ENCODE measurements at regions of chr2 and their contacts with region 1.

Region 1: DNA sequence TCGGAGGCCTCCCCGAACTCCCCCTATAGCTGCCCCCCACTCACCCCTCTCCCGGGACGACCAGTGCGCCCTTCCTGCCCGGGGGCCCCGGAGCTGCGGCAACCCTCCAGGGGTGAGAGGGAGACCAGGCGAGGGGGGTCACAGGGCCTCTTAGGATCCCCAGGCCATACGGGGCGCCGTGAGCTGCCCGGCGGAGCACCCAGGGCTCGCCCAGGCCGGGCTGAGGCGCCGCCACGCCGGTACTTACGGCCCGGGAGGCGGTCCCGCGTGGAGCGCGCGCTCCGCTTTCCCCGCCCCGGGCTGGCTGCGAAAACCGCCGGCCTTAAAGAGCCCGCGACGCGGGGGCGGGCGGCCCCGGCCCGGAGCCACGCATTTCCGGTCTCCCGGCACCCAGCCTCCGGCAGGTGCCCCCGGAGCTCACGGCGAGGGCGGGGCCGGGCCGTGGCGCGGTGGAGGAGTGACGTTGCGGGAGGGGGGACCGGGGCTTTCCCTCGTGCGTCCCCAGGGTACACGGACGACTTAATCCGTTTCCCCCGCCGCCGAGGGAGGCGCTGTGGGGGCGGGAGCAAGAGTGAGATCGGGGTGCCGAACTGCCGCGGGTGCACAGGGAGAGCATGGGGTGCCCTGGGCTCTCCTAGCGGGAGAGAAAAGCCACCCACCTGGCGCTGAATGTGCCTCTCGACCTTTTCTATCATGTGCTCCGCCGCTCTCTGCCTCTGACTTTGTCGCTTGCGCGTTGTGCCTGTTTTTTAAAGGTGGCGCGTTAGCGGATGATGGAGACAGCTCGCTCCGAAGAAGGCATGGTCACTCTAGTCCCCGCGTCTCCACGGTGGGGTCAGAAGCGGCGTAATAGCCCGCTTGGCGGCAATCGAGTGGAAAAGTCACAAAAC is at the start of gene METTL21A:
- DNase-seq: peak; percentile 87 to 91
- ATAC-seq: peak; percentile 89 to 96 (median 93)
- H3K4me3 ChIP-seq: peak within 1 kb of the TSS; percentile 52 to 99 (median 90)
- H3K27ac ChIP-seq: peak within 1 kb of the TSS; percentile 61 to 99 (median 94)
- H3K4me1 ChIP-seq: peaks cover 0 to 43% (median 25%) of the 10 kb centered on the region in 9 donors
- H3K27me3 ChIP-seq: no peaks in the 10 kb centered on the region
- CTCF ChIP-seq: peak; percentile 23 to 55 (median 44)
- total RNA-seq, gene METTL21A: 10.0 to 22.5 (median 12.9) TPM

Region 2: GRCh38 chr2:207370646-207371045 is 254.6 kb before region 1 on chr2:
- intact Hi-C with region 1: no loop called
- DNase-seq: no peak
- ATAC-seq: no peak
- H3K4me3 ChIP-seq: no peak overlapping the region
- H3K27ac ChIP-seq: no peak overlapping the region
- H3K4me1 ChIP-seq: no peaks in the 10 kb centered on the region
- H3K27me3 ChIP-seq: no peaks in the 10 kb centered on the region
- CTCF ChIP-seq: no peak

Region 3: GRCh38 chr2:207558106-207558505 is 67.2 kb before region 1 on chr2:
- intact Hi-C with region 1: loop called in 1 of 10 experiments (anchors 5 kb)
- DNase-seq: no peak
- ATAC-seq: no peak
- H3K4me3 ChIP-seq: no peak overlapping the region
- H3K27ac ChIP-seq: no peak overlapping the region
- H3K4me1 ChIP-seq: peaks cover 0 to 68% (median 61%) of the 10 kb centered on the region in 9 donors
- H3K27me3 ChIP-seq: no peaks in the 10 kb centered on the region
- CTCF ChIP-seq: no peak

Region 4: DNA sequence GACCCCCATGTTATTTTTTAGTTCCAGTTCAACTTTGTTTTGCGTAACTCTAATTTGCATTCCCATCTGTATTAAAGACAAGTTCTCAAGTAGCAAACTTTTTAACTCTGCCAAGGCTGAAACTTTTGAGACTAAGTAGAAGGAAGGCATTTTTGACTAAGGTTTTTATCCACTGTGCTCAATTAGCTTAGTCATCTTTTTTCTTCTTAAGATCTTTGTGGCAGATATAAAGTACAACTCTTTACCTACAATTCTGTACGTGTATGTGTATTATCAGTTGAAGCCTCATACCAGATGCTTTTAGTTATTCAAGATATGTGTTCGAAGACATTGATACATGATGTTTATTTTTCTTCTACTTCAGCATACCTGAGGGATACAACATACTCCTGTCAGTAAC is 53.9 kb before region 1 on chr2:
- intact Hi-C with region 1: loop called in 1 of 10 experiments (anchors 5 kb)
- DNase-seq: no peak
- ATAC-seq: no peak
- H3K4me3 ChIP-seq: no peak overlapping the region
- H3K27ac ChIP-seq: no peak overlapping the region
- H3K4me1 ChIP-seq: peaks cover 0 to 7% (median 0%) of the 10 kb centered on the region in 9 donors
- H3K27me3 ChIP-seq: no peaks in the 10 kb centered on the region
- CTCF ChIP-seq: no peak

Region 5: GRCh38 chr2:207676827-207677354 is 51.6 kb after region 1 on chr2:
- intact Hi-C with region 1: loop called in 1 of 10 experiments (anchors 2 kb)
- DNase-seq: no peak
- ATAC-seq: peak in 7 of 8 donors; percentile 33 to 87 (median 84)
- H3K4me3 ChIP-seq: peak overlapping the region in 3 of 10 donors; percentile 7 to 31 (median 15)
- H3K27ac ChIP-seq: peak overlapping the region in 9 of 10 donors; percentile 5 to 75 (median 43)
- H3K4me1 ChIP-seq: peaks cover 0 to 18% (median 11%) of the 10 kb centered on the region in 9 donors
- H3K27me3 ChIP-seq: peaks cover 0 to 27% (median 0%) of the 10 kb centered on the region in 7 donors
- CTCF ChIP-seq: no peak

Region 6: DNA sequence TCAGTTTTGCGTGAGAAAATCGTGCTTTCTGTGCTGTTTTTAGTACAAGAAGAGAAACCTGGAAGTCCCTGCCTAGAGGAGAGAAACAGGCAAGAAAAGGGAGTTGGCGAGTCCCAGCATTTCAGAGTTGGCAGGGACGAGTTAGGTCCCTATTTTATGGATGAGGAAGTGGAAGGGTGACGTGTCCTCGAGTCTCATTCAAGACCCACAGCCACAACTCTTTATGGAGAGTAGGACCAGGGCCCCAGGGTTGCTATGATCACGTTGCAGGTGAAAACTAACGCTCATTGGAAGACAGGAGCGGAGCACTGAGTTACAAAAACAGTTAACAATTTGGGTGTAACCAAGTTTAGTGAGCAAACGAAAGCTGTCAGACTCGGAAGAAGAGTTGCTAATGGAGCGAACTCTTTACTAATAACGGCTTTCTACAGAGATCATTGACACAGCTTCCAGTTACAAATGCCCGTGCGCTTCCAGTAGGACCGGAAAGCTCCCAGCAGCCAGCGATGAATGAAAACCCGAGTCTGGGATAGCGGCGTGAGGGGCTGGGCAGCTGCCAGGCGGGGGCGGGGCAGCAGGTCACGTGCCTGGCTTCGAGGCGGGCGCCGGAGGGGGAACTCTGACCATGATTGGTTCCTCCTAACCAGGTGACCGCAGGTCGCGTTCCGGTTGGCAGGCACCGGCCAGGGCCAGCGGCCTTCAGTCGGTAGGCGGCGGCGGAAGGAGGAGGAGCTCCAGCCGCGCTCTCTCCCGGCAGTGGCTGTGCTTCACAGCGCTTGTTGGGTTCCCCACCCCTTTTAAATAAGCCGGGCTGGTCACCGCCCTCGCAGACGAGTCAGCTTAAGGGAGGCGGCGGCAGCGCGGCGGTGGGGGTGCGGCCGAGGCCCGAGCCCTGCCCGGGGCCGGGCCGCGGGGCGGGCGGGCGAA is 85.8 kb after region 1 on chr2 and contains the start of gene CCNYL1:
- intact Hi-C with region 1: loop called in 8 of 10 experiments (anchors 2 to 10 kb)
- DNase-seq: peak; percentile 98 to 99
- ATAC-seq: peak; percentile 99 to 100 (median 100)
- H3K4me3 ChIP-seq: peak within 1 kb of the TSS; percentile 75 to 98 (median 91)
- H3K27ac ChIP-seq: peak within 1 kb of the TSS; percentile 51 to 95 (median 91)
- H3K4me1 ChIP-seq: peaks cover 2 to 28% (median 22%) of the 10 kb centered on the region in 9 donors
- H3K27me3 ChIP-seq: no peaks in the 10 kb centered on the region
- CTCF ChIP-seq: peak in 7 of 9 donors; percentile 17 to 54 (median 47)
- total RNA-seq, gene CCNYL1: 5.6 to 16.1 (median 9.7) TPM

Region 7: DNA sequence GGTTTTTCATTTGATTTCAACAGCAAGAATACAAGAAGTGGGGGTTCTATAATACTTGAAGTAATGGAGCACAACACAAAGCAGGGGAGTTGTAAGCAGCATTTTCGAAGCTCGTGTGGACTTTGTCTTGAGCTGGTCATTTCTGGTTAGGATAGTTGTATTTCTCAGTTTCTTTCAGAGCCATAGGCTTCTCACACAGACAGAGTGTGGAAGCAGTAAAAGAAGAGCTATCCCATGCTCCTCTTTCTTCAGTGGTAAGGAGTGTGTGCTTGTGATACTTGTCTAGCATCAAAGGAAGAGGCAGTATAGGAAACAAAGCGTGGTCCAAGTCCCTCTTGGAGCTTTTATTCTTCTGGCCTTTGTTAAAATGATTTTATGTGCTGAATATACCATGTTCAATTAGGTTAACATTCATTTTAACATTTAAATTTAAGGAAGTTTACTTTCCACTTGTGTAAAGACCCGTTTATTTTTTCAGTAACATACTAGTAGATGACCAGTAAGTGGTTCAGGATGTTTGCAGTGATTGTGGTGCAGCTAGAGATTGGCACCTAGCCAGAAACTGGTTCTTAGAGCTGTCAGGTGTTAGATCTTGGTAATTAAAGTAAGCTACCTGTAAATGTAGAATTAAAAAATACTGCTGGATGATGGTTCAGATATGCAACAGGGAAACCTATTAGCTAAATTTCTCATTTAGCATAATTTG is 100.8 kb after region 1 on chr2:
- intact Hi-C with region 1: loop called in 2 of 10 experiments (anchors 5 to 10 kb)
- DNase-seq: no peak
- ATAC-seq: no peak
- H3K4me3 ChIP-seq: no peak overlapping the region
- H3K27ac ChIP-seq: no peak overlapping the region
- H3K4me1 ChIP-seq: peaks cover 0 to 13% (median 0%) of the 10 kb centered on the region in 9 donors
- H3K27me3 ChIP-seq: no peaks in the 10 kb centered on the region
- CTCF ChIP-seq: no peak

Region 8: DNA sequence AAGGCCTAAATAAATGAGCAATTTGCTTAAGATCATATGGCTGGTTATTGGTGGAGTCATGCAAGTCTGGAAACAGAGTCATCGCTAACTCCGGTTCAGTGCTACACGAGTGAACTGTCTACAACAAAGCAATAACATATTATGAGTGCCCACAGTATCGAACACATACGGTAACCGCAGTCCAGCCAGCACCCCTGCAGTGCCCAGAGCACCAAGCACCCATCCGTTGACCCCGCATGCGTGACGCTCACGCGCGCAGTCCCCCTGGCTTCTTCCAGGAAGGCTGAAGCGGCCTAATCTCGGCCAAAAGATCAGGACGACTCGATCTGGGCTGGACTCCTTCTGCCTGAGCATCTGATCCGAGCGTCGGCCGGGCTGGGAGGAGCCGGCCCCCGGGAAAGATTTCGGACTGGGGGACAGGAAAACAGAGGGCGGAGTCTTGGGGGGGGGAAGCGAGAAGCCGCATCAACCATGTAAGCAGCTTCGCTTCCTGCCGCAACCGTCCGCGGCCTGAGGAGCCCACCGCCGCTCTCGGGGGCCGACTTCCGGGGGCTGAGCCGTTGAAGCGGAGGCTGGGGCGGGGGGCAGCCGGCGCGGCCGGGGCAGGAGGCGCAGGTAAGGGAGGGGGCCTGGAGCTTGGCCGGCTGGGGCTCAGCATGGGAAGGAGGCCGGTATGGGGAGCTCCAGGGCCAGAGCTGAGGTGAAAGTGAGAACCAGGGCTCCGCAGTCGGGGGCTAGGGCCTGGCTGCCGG is 640.7 kb after region 1 on chr2 and contains the start of gene PIKFYVE:
- intact Hi-C with region 1: loop called in 1 of 10 experiments (anchors 10 kb)
- DNase-seq: peak; percentile 92 to 98
- ATAC-seq: peak; percentile 97 to 98 (median 97)
- H3K4me3 ChIP-seq: peak within 1 kb of the TSS; percentile 73 to 99 (median 90)
- H3K27ac ChIP-seq: peak within 1 kb of the TSS; percentile 66 to 99 (median 96)
- H3K4me1 ChIP-seq: peaks cover 0 to 41% (median 35%) of the 10 kb centered on the region in 9 donors
- H3K27me3 ChIP-seq: no peaks in the 10 kb centered on the region
- CTCF ChIP-seq: peak in 2 of 9 donors; percentile 16 to 26
- total RNA-seq, gene PIKFYVE: 12.9 to 24.8 (median 18.4) TPM